ENCODE measurements at regions of chr13 and their contacts with region 1.

Region 1: DNA sequence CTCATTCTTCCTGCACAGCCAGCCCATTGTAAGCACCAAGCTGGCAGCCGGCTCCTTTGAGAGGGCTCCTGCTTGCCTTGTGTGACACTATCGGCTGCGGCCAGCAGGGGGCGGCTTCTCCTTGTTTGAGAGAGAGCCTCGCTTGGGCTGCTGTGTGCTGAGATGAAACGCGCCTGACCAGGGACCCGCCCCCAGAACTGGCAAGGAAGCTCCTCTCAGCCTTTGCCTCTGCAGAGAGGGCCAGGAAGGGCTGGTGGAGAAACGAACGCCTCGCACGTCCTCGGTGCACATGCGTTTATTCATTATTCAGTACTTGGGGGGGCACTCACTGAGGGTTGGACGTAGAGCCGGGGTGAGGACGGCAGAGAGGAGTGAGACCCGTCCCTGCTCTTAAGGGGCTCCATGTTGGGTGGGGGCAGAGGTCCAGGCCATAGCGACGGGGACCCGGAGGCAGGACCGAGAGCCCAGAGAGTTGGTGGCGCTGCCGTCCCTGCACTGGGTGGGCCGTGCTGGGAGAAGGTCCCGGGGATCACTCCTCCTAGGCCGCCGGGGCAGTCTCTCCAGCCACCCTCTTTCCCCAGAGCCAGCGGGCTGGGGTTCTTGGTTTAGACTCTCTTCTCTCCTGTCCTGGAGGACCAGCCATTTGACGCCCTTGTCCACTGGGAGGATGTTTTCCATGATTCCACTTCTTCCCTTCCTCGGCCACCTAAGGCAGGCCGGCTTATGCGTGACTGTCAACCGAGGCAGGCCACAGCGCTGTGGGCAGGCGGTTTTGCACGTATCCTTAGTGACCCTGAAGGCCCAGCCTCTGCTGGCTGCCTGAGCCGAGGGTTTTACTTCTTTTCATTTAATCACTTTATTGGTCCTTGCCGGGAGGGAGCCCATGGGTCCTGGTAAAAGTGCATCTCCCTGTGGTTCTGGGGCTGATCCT is 174.5 kb downstream of the KATNAL1 start:
- DNase-seq: peak; percentile 98
- ATAC-seq: peak; percentile 93 to 95

Region 2: DNA sequence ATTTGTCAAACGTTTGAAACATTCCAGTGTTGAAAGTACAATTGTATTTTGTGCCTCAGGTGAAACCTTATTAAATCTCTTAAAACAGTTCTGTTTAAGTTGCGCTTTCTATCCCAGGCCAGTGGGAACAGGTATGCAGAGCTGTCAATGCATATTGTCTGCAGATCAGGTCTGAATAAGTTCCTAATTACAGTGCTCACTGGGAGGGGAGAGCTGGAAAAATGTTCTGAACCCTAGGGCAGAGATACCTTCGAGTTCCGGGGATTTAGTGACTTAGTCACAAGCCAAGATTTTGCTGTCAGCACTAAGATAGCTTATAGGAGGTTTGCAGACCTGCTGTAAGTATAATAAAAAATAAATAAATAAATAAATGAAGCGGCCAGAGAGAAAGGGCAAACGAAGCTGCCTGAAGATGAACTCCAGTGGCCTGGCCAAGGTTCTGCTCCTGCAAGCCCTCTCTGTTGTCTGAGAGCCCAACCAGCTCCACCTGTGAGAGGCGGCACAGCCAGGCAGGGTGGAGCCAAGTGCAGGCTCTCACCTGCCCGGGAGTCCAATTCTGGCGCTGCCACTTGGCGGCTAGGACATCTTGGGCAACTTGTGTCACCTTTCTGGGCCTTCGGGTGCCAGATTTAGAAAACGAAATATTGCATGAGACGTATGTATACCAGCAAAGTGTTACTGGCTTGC is 439.5 kb before region 1 on chr13:
- intact Hi-C with region 1: no loop called
- DNase-seq: no peak
- ATAC-seq: no peak

Region 3: GRCh38 chr13:30457306-30457891 is 324.5 kb after region 1 on chr13:
- intact Hi-C with region 1: loop called in 1 of 2 experiments (anchors 5 kb)
- DNase-seq: no peak
- ATAC-seq: no peak

Region 4: DNA sequence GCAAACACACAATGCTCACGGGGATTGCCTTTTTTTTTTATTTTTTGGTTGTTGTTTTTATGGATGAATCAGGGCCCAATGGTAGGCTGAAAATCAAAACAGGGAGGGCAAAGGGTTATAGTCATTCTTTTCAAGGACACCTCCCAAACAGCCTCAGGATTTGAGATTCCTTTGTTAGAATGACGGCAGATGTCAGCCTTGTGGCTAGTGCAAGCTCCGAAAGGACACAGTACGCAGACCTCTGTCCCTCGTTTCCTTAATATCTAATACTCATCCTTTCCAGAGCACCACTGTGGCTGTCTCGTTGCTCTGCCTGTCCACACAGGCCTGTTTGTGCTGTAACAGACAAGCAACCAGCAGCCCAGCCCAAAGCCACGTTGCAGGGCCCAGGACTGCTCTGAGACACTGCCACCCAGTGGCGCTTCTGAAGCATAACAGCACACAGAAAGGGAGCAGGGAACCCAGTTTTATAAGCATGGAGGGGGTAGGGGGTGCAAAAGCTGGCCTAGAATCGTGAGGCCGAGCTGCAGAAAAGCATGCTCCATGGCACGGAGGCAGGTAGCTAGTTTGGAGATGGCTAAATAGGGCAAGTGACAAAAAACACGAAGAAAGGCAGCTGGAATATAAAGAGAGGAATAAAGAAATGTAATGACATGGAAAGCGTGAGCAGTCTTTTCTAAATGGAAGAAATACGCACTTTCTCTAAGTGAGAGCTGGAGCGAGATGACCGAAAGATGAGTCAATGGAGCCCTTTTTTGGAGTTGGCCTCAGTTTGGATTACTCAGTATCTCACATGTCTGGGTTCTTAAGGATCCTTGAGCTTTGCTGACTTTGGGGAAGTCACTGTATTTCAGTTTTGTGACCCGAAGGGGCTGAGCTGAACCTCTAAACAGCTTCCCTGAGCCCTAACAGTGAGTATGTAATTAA is 732.5 kb after region 1 on chr13:
- intact Hi-C with region 1: loop called in 1 of 2 experiments (anchors 5 kb)
- DNase-seq: peak; percentile 86
- ATAC-seq: peak; percentile 67 to 77

Region 5: GRCh38 chr13:31044377-31045285 is 911.7 kb after region 1 on chr13:
- intact Hi-C with region 1: loop called in 1 of 2 experiments (anchors 10 kb)
- DNase-seq: peak; percentile 81
- ATAC-seq: peak; percentile 85 to 89

Measured in left cardiac atrium (tissue), 4 donors.